ENCODE measurements at regions of chr12 and their contacts with region 1.

Region 1: GRCh38 chr12:55073043-55074022 is 52.9 kb upstream of the OR9K2 start:
- DNase-seq: peak; percentile 87
- H3K4me3 ChIP-seq: no peak overlapping the region
- H3K27ac ChIP-seq: no peak overlapping the region
- H3K4me1 ChIP-seq: no peaks in the 10 kb centered on the region
- H3K27me3 ChIP-seq: peaks cover 0 to 19% (median 0%) of the 10 kb centered on the region in 7 donors
- CTCF ChIP-seq: peak; percentile 73 to 87 (median 80)
- POLR2A ChIP-seq: no peak

Region 2: GRCh38 chr12:54723379-54724256 is 349.7 kb before region 1 on chr12:
- intact Hi-C with region 1: loop called (anchors 10 kb)
- DNase-seq: no peak
- H3K4me3 ChIP-seq: no peak overlapping the region
- H3K27ac ChIP-seq: no peak overlapping the region
- H3K4me1 ChIP-seq: no peaks in the 10 kb centered on the region
- H3K27me3 ChIP-seq: peaks cover 0 to 4% (median 0%) of the 10 kb centered on the region in 7 donors
- CTCF ChIP-seq: peak in 9 of 11 experiments; percentile 13 to 60 (median 47)
- POLR2A ChIP-seq: no peak

Region 3: DNA sequence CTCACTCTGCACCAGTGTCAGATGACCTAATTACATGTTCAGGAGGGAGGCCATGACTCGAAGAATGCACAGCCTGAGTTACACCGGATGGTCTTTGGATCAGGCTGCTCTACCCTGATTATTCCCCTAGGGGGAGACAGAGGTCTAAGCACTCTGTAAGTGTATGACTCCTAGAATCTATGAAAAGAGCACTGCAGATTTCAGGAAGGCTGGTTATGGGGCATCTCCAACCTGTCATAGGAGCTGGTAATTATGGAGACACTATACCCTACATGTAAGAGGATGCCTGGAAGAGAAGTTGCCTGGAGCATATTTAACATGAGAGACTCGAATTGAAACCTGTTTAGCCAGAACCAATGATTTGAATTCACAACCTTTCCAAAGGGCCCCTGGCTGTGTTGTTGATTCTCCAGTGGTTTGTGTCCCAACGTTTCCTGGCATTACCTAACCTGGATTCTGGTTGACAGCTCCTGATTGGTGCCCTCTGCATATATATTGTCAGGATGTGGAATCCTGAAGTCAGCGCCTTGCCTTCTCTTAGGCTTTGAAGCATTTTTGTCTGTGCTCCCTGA is 219.3 kb before region 1 on chr12 and contains the start of gene MUCL1:
- intact Hi-C with region 1: loop called (anchors 10 kb)
- DNase-seq: no peak
- H3K4me3 ChIP-seq: no peak within 1 kb of the TSS
- H3K27ac ChIP-seq: no peak within 1 kb of the TSS
- H3K4me1 ChIP-seq: peaks cover 0 to 14% (median 0%) of the 10 kb centered on the region in 6 donors
- H3K27me3 ChIP-seq: no peaks in the 10 kb centered on the region
- CTCF ChIP-seq: peak; percentile 63 to 88 (median 75)
- POLR2A ChIP-seq: no peak
- total RNA-seq, gene MUCL1: not detected

Region 4: GRCh38 chr12:54998958-54999510 is 74.3 kb before region 1 on chr12:
- intact Hi-C with region 1: loop called (anchors 5 kb)
- DNase-seq: no peak
- H3K4me3 ChIP-seq: no peak overlapping the region
- H3K27ac ChIP-seq: no peak overlapping the region
- H3K4me1 ChIP-seq: peaks cover 0 to 11% (median 2%) of the 10 kb centered on the region in 6 donors
- H3K27me3 ChIP-seq: no peaks in the 10 kb centered on the region
- CTCF ChIP-seq: no peak
- POLR2A ChIP-seq: no peak

Region 5: DNA sequence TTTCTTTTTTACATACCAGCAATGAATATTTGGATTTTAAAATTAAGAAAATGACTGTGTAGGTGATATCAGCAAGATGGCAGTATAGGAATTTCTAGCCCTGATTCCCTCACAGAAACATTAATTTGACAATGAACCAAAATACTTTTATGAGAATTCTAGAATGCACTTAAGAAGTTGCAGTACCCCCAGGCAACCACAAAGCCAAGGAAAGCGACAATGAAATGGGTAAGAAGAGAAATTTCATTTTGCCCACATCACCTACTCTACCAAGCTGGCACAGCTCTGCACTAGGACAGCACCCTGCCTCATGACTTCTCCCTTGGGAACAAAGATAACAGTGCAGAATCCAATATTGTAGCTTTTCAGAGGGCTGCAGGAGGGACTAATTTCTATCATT is 59.5 kb after region 1 on chr12:
- intact Hi-C with region 1: no loop called
- DNase-seq: no peak
- H3K4me3 ChIP-seq: no peak overlapping the region
- H3K27ac ChIP-seq: no peak overlapping the region
- H3K4me1 ChIP-seq: no peaks in the 10 kb centered on the region
- H3K27me3 ChIP-seq: peaks cover 0 to 44% (median 0%) of the 10 kb centered on the region in 7 donors
- CTCF ChIP-seq: no peak
- POLR2A ChIP-seq: no peak

Region 6: GRCh38 chr12:55172686-55173085 is 99.4 kb after region 1 on chr12:
- intact Hi-C with region 1: no loop called
- DNase-seq: no peak
- H3K4me3 ChIP-seq: no peak overlapping the region
- H3K27ac ChIP-seq: no peak overlapping the region
- H3K4me1 ChIP-seq: no peaks in the 10 kb centered on the region
- H3K27me3 ChIP-seq: no peaks in the 10 kb centered on the region
- CTCF ChIP-seq: no peak
- POLR2A ChIP-seq: no peak